Cardiac septum (tissue), 1 donor: ENCODE measurements at regions of chr2 and their contacts with region 1.

Region 1: GRCh38 chr2:236569573-236569973 is at the start of gene ACKR3:
- DNase-seq: peak; percentile 87
- total RNA-seq, gene ACKR3: 36.6 TPM

Region 2: GRCh38 chr2:236352761-236353593 is 216.6 kb before region 1 on chr2:
- intact Hi-C with region 1: loop called (anchors 5 kb)
- DNase-seq: no peak

Region 3: GRCh38 chr2:236642584-236643291 is 73.2 kb after region 1 on chr2:
- intact Hi-C with region 1: loop called (anchors 2 kb)
- DNase-seq: peak; percentile 88

Region 4: DNA sequence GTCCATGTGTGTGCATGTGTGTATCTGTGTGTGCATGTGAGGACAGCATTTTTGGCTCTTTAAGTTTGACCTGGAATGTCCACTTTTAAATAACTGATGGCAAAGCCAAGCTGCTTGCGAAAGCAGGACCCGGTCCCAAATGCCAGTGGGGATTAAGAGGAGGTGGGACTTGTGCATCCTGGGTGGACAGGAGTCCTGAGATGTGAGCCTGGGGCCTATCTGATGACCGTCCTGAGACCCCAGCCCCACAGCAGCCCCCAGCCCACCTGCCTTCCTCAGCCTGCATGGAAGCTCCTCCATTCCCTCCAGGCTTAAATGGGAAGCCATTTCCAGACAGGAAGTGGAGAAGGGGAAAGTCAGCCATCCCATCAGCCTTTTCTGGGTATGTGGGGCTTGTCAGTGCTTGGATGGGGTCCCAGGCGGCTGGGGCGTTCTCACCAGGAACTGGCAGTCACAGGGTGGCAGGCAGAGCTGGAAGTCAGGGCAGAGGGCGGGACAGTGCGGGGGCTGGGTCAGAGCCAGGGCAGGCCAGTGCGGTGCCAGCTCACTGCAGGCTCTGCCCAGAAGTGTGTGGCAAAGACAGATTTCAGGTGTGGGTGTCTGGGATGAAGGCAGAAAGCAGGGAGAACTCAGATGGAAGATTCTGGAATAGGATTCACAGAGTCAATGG is 117.9 kb after region 1 on chr2:
- intact Hi-C with region 1: loop called (anchors 5 kb)
- DNase-seq: peak; percentile 69

Region 5: GRCh38 chr2:236887531-236887930 is 318.0 kb after region 1 on chr2:
- intact Hi-C with region 1: loop called (anchors 5 kb)
- DNase-seq: no peak

Region 6: GRCh38 chr2:237685408-237685807 is 1115.8 kb after region 1 on chr2:
- intact Hi-C with region 1: no loop called
- DNase-seq: no peak